B cell (primary cell): ENCODE measurements at regions of chr3 and their contacts with region 1.

Region 1: DNA sequence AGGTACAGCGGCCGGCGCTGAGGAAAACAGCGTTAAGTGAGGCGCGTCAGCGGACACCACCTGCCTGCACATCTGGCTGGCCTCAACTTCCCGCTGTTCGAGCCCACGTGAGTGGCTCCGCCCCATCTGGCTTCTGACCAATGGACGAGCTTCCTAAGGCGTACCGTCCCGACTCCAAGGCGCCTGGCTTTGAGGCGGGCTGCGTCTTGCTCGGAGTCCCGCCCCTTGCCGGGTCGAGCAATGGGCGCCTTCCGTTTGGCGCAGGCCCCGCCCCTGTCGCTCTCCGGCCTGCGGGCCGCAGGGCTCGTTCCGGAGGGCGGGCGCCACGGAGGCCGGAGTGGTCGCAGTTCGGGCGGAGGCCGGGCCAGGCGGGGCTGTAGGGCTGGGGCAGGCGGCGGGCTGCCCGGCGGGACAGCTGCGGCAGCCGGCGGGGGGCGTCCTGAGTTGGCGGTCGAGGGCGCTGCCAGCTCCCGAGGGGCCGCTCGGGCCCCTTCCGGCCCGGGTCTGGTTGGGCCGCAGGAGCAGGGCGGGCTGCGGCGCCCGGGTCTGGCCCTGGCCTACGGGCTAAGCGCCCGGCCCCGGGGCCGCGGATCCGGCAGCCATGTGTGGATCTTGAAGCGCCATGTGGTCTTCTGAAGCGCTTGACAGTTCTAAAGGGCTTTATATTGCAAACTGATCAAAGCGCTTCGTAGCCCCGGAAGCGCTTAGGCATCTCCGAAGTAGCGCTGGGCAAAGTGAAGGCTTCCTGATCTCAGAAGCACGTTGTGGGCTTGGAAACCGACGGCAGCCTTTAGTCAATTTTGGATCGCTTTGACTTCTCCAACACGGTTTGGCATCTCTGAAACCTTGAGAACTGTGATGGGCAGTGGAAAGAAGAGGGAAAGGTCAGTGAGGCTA is at the start of gene TATDN2:
- DNase-seq: peak; percentile 96
- ATAC-seq: peak; percentile 96
- H3K4me3 ChIP-seq: peak within 1 kb of the TSS; percentile 69 to 86 (median 82)
- H3K4me3 Mint-ChIP-seq: peak within 1 kb of the TSS; percentile 97
- H3K27ac ChIP-seq: peak within 1 kb of the TSS; percentile 70 to 78
- H3K27ac Mint-ChIP-seq: peak within 1 kb of the TSS; percentile 92
- H3K4me1 ChIP-seq: peaks cover 25 to 28% of the 10 kb centered on the region in 2 donors
- H3K4me1 Mint-ChIP-seq: peaks cover 39% of the 10 kb centered on the region
- H3K27me3 ChIP-seq: no peaks in the 10 kb centered on the region
- H3K27me3 Mint-ChIP-seq: no peaks in the 10 kb centered on the region
- CTCF ChIP-seq: no peak
- total RNA-seq, gene TATDN2: 62.7 and 62.9 TPM in 2 replicates

Region 2: DNA sequence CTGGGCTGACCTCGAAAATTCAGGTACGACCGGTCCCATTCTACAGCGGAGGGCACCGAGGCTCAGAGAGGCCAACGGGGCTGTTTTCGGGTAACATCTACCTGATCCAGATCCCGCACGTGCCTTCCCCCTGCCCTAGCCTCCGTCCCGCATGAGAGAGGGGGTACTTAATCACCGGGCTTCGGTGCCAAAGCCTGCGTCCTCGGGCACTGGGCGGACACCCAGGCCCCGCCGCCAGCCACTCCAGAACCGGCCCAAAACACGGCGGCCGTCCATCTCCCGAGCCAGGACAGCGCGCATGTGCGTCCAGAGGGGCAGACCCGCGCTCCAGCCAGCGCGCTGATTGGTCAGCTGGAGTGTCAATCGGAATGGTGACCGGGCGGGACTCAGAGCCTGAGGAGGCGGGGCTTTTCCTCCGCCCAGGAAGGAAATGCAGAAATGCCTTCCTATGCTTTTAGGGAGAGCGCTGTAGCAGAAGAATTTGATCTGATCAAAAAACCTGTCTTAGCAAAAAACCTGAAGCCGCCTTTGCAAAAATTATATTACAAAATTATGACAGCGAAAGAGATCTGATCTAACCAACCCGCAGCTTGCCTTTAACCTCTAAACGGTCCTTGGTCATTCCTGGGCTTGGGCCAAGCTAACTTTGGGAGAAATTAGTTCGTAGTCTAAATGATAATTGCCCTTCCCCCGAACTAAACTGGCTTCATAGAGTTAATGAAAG is 404.6 kb before region 1 on chr3 and contains the start of gene RPUSD3:
- CTCF ChIA-PET with region 1: no interaction called
- POLR2A ChIA-PET with region 1: no interaction called
- intact Hi-C with region 1: loop called (anchors 5 kb)
- DNase-seq: peak; percentile 97
- ATAC-seq: peak; percentile 100
- H3K4me3 ChIP-seq: peak within 1 kb of the TSS; percentile 60 to 96 (median 73)
- H3K4me3 Mint-ChIP-seq: peak within 1 kb of the TSS; percentile 98
- H3K27ac ChIP-seq: peak within 1 kb of the TSS; percentile 17 to 75
- H3K27ac Mint-ChIP-seq: peak within 1 kb of the TSS; percentile 92
- H3K4me1 ChIP-seq: peaks cover 8 to 17% of the 10 kb centered on the region in 2 donors
- H3K4me1 Mint-ChIP-seq: peaks cover 20% of the 10 kb centered on the region
- H3K27me3 ChIP-seq: no peaks in the 10 kb centered on the region
- H3K27me3 Mint-ChIP-seq: no peaks in the 10 kb centered on the region
- CTCF ChIP-seq: no peak
- total RNA-seq, gene RPUSD3: 60.7 and 62.1 TPM in 2 replicates

Region 3: DNA sequence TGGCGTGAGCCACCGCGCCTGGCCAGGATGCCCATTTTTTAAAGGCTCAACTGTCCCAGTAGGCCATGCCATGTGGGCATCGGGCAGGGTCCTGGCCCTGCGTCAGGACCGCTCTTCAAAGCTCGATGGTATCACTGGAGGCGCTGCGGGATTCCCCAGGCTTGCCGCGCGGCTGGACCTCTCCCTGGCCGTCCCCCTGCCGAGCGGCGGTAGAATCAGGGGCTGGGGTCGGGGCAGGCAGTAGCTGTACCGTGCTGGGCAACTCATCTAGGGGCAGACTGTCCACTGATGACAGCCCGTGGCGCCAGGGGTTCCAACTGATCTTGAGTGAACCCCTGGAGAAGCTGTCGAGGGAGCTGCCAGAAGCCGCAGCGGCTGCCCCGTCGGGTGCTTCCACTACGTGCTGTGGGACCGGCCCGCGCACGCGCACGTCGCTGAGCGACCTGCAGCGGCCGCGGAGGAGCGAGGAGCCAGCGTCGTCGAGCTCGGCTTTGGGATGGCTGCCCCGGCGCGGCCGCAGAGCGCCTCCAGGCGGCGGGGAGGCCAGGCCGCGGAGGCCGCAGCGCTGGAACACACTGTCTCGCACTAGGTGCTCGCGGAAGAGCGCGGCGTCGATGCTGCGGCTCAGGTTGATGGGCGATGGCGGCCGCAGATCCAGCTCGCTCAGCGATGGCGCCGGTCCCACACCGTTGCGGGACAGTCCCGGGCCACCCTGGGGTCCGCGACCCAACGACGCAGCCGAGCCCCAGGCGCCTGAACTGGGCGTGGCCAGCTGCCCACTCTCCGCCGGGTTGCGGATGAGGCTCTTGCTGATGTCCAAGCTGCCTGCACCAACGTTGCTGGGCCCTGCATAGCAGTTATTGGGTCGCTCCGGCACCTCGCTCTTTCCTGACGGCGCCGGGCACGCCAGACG is 302.1 kb before region 1 on chr3:
- CTCF ChIA-PET with region 1: no interaction called
- POLR2A ChIA-PET with region 1: no interaction called
- intact Hi-C with region 1: loop called (anchors 5 kb)
- DNase-seq: peak; percentile 79
- ATAC-seq: peak; percentile 92
- H3K4me3 ChIP-seq: peak overlapping the region in 3 of 5 experiments; percentile 27 to 51 (median 50)
- H3K4me3 Mint-ChIP-seq: peak overlapping the region; percentile 89
- H3K27ac ChIP-seq: no peak overlapping the region
- H3K27ac Mint-ChIP-seq: peak overlapping the region; percentile 85
- H3K4me1 ChIP-seq: peaks cover 6 to 13% of the 10 kb centered on the region in 2 donors
- H3K4me1 Mint-ChIP-seq: peaks cover 11% of the 10 kb centered on the region
- H3K27me3 ChIP-seq: peaks cover 0 to 4% (median 0%) of the 10 kb centered on the region in 4 experiments
- H3K27me3 Mint-ChIP-seq: no peaks in the 10 kb centered on the region
- CTCF ChIP-seq: peak; percentile 69

Region 4: GRCh38 chr3:10026084-10026890 is 222.1 kb before region 1 on chr3 and contains the start of gene FANCD2:
- CTCF ChIA-PET with region 1: no interaction called
- POLR2A ChIA-PET with region 1: no interaction called
- intact Hi-C with region 1: loop called (anchors 1 kb)
- DNase-seq: peak; percentile 96
- ATAC-seq: peak; percentile 83
- H3K4me3 ChIP-seq: peak within 1 kb of the TSS; percentile 83 to 94 (median 91)
- H3K4me3 Mint-ChIP-seq: peak within 1 kb of the TSS; percentile 99
- H3K27ac ChIP-seq: peak within 1 kb of the TSS; percentile 94 to 96
- H3K27ac Mint-ChIP-seq: peak within 1 kb of the TSS; percentile 96
- H3K4me1 ChIP-seq: peaks cover 18 to 23% of the 10 kb centered on the region in 2 donors
- H3K4me1 Mint-ChIP-seq: peaks cover 34% of the 10 kb centered on the region
- H3K27me3 ChIP-seq: no peaks in the 10 kb centered on the region
- H3K27me3 Mint-ChIP-seq: no peaks in the 10 kb centered on the region
- CTCF ChIP-seq: no peak
- total RNA-seq, gene FANCD2: 31.7 and 35.5 TPM in 2 replicates

Region 5: DNA sequence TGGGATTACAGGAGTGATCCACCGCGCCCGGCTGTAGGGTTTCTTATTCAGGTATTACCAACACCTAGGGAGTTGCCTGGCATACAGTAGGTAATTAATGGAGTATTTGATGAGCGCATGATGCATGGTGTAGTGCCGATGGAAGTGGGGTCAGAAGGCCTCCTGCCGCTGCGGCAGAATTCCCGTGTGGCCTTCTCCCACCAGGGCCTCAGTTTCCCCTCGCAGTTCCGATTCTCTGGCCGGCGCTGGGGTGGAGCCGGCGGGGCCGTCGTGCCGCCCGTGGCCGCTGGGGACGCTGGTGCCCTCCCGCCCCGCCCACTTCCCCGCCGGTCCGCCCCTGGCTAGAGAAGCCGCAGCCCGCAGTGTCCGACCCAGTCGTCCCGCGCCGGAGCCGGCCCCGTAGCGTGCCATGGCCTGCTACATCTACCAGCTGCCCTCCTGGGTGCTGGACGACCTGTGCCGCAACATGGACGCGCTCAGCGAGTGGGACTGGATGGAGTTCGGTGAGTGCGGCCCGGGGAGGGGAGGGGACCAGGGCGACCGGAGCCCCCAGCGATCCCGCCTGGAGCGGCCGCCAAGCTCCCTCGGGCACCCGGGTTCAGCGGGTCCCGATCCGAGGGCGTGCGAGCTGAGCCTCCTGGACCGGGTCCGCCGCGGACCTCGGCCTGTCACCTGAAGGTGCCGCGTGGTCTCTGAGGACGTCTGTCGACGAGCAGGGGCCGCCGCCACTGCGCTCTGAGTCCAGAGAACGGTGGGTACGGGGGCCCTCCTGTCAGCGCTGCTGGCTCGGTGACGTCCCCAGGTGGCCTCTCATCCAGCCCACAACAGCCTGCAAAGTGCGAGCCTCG is 83.7 kb before region 1 on chr3 and contains the start of gene IRAK2:
- CTCF ChIA-PET with region 1: interaction called, 4 read pairs
- POLR2A ChIA-PET with region 1: no interaction called
- intact Hi-C with region 1: loop called (anchors 2 kb)
- DNase-seq: peak; percentile 83
- ATAC-seq: peak; percentile 91
- H3K4me3 ChIP-seq: peak within 1 kb of the TSS; percentile 66 to 95 (median 84)
- H3K4me3 Mint-ChIP-seq: peak within 1 kb of the TSS; percentile 91
- H3K27ac ChIP-seq: peak within 1 kb of the TSS; percentile 43 to 79
- H3K27ac Mint-ChIP-seq: peak within 1 kb of the TSS; percentile 65
- H3K4me1 ChIP-seq: peaks cover 15 to 44% of the 10 kb centered on the region in 2 donors
- H3K4me1 Mint-ChIP-seq: peaks cover 37% of the 10 kb centered on the region
- H3K27me3 ChIP-seq: no peaks in the 10 kb centered on the region
- H3K27me3 Mint-ChIP-seq: no peaks in the 10 kb centered on the region
- CTCF ChIP-seq: peak; percentile 98
- total RNA-seq, gene IRAK2: 23.2 and 24.6 TPM in 2 replicates

Region 6: DNA sequence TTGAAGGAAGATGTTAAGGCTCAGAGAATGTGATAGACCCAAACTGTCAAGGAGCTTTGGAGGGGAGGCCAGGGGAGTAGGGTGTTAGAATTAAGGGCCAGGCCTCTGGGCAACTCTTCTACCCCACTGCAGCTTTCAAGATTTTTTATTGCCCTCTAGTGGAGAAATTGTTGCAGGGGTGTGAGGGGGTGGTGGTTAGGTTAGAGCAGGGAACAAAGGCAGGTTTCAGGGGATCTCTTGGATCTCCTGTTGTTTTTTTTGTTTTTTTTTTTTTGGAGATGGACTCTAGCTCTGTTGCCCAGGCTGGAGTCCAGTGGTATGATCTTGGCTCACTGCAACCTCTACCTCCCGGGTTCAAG is 73.9 kb after region 1 on chr3:
- CTCF ChIA-PET with region 1: interaction called, 5 read pairs
- POLR2A ChIA-PET with region 1: interaction called, 6 read pairs
- intact Hi-C with region 1: loop called (anchors 1 kb)
- DNase-seq: peak; percentile 55
- ATAC-seq: no peak
- H3K4me3 ChIP-seq: no peak overlapping the region
- H3K4me3 Mint-ChIP-seq: peak overlapping the region; percentile 26
- H3K27ac ChIP-seq: no peak overlapping the region
- H3K27ac Mint-ChIP-seq: peak overlapping the region; percentile 70
- H3K4me1 ChIP-seq: peaks cover 11 to 21% of the 10 kb centered on the region in 2 donors
- H3K4me1 Mint-ChIP-seq: peaks cover 26% of the 10 kb centered on the region
- H3K27me3 ChIP-seq: peaks cover 0 to 2% (median 0%) of the 10 kb centered on the region in 4 experiments
- H3K27me3 Mint-ChIP-seq: peaks cover 8% of the 10 kb centered on the region
- CTCF ChIP-seq: peak; percentile 56